GM10248 (cell line): ENCODE measurements at regions of chr6 and their contacts with region 1.

Region 1: DNA sequence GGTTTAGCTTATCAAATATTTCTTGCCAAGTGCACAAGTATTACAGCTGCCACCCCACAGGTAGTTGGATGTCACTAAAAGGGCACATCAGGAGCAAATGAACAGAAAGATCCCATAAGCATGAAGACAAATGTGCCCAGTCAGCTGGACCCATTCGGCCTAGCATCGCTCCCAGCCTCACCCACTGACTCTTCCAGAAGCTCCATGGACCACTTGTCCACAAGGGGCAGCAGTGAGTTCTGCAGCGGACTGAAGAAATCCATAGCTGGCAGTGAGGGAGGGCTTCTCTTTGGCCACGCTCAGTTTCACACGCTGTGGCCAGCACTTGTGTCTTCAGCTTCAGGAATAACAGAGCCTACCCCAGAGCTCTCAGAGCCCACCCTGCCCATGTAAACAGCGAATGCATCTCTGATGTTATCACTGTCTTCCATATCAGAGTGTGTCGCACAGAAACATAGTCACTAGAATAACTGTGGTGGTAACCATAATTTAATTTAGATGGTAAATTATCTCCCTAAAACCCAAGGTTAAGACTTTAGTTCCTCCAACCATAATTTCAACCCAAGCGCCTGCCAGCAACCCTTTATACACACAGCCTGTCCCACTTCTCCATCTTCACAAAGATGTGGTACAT is 15.8 kb downstream of the CGA start:
- DNase-seq: peak; percentile 64
- CTCF ChIP-seq: peak; percentile 75

Region 2: DNA sequence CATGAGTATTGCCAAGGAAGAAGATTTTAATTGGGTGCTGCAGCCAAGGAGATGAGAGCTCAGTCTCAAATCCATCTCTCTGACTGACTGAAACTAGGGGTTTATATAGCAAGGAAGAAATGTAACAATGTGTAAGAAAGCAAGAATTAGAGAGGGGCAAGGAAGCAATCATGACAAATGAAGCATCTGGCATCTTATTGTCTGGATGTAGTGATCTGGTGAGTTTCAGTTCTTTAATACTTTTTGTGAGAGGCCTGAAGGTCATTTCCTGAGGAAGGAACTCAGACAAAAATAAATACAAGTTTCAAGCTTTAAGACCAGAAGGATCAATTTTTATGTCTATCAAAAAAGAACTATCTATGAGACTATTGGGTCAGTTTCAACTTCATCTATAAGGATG is 77.6 kb before region 1 on chr6:
- CTCF ChIA-PET with region 1: no interaction called
- POLR2A ChIA-PET with region 1: no interaction called
- DNase-seq: no peak
- CTCF ChIP-seq: no peak

Region 3: DNA sequence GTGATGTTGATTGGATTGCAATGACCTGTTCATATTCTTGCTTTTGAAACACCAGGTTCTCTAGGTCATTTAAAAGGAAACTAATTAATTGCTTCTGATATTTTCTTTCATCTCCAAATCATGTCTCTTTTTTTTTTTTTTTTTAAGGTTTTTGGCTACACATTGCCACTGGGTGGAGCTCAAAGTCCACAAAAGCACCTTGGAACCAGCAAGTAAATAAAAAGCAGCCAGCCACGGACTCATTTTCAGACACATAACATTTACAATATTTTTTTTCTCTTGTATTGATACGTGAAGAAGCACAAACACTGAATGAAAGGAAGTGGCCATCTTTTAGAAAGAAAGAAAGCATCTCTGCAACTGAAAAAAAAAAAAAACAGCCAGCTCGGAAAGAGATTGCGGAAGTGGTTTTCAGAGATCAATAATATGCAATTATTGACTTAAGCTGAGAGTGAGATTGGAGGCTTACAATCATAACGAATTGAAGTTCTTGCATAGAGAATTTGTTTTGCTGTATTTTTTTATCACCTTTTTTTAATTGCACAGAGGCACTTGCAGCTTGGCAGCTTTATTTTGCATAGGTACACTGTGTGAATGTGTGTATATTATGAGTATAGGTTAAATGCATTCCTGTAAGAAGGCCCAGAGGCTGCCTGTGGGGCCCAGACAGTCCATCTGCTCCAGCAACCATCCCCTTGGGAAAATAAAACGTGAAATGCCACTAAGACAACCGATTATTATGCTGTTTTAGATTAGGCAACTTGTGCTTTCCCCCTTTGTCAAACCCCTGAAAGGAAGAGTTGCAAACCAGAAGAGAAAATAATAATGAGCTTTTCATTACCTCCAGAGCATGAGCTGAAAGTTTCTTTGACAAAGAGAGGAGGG is 12.4 kb before region 1 on chr6:
- CTCF ChIA-PET with region 1: interaction called, 99 read pairs
- POLR2A ChIA-PET with region 1: no interaction called
- DNase-seq: peak; percentile 60
- CTCF ChIP-seq: peak; percentile 58

Region 4: DNA sequence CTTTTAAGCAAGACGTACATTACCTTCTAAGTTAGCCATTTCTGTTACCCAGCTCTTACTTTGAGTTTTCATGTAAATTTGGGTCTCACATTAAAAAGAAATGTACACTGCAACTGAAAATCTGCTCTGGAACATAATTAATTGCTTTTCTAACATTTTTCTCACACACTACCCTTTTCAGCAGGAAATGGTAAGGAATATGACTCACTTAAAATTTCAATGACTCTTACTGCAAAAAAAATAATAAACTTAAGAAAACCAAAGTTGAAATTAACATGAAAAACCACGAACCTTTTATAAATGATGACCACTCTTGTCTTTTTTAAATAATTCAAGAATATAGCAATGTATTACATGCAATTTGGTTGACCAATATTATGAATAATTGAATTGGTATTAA is 14.6 kb after region 1 on chr6:
- CTCF ChIA-PET with region 1: interaction called, 31 read pairs
- POLR2A ChIA-PET with region 1: no interaction called
- DNase-seq: no peak
- CTCF ChIP-seq: no peak

Region 5: GRCh38 chr6:87099472-87099871 is 20.4 kb after region 1 on chr6:
- CTCF ChIA-PET with region 1: interaction called, 31 read pairs
- POLR2A ChIA-PET with region 1: no interaction called
- DNase-seq: no peak
- CTCF ChIP-seq: no peak

Region 6: GRCh38 chr6:87105823-87106222 is 26.7 kb after region 1 on chr6:
- CTCF ChIA-PET with region 1: interaction called, 19 read pairs
- POLR2A ChIA-PET with region 1: no interaction called
- DNase-seq: no peak
- CTCF ChIP-seq: no peak

Region 7: GRCh38 chr6:87115402-87116135 is 36.5 kb after region 1 on chr6:
- CTCF ChIA-PET with region 1: interaction called, 19 read pairs
- POLR2A ChIA-PET with region 1: no interaction called
- DNase-seq: peak; percentile 34
- CTCF ChIP-seq: no peak

Region 8: GRCh38 chr6:87312860-87313259 is 233.8 kb after region 1 on chr6:
- CTCF ChIA-PET with region 1: no interaction called
- POLR2A ChIA-PET with region 1: no interaction called
- DNase-seq: no peak
- CTCF ChIP-seq: no peak